ENCODE measurements at regions of chr4 and their contacts with region 1.

Region 1: GRCh38 chr4:157978680-157979361 is 194.0 kb downstream of the GASK1B start:
- DNase-seq: peak in 4 of 5 donors; percentile 27 to 38 (median 32)
- ATAC-seq: peak; percentile 67 to 88 (median 79)
- H3K4me3 ChIP-seq: peak overlapping the region in 5 of 12 donors; percentile 5 to 39 (median 27)
- H3K27ac ChIP-seq: no peak overlapping the region
- H3K4me1 ChIP-seq: peaks cover 0 to 8% (median 0%) of the 10 kb centered on the region in 12 donors
- H3K27me3 ChIP-seq: no peaks in the 10 kb centered on the region
- CTCF ChIP-seq: peak; percentile 72 to 91 (median 84)
- POLR2A ChIP-seq: no peak

Region 2: DNA sequence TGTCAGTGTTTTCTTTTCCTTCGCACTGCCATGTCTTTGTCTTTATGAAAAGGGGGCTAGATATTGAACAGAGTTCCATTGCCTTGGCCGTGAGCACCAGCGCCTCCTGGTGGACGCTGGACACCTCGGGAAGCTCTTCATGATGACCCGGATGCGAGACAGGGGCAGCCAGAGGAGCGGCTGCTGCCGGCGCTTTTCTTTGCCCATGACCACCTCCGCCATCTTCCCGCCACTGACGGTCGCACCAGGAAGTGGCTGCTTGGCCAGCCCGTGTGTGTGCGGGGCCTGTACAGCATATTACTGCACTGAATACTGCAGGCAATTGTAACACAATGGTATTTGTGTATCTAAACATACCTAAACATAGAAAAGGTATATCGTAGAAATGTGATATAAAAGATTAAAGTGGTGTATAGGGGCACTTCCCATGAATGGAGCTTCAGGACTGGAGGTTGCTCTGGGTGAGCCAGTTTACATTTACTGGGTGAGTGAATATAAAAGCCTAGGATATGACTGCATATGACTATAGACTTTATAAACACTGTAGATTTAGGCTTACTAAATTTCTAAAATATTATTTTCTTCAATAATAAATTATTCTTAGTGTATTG is 774.1 kb before region 1 on chr4:
- intact Hi-C with region 1: loop called in 1 of 10 experiments (anchors 5 kb)
- DNase-seq: no peak
- ATAC-seq: no peak
- H3K4me3 ChIP-seq: no peak overlapping the region
- H3K27ac ChIP-seq: no peak overlapping the region
- H3K4me1 ChIP-seq: no peaks in the 10 kb centered on the region
- H3K27me3 ChIP-seq: no peaks in the 10 kb centered on the region
- CTCF ChIP-seq: peak in 6 of 12 donors; percentile 9 to 39 (median 24)
- POLR2A ChIP-seq: no peak

Region 3: GRCh38 chr4:157217708-157218107 is 761.1 kb before region 1 on chr4:
- intact Hi-C with region 1: loop called in 6 of 10 experiments (anchors 5 to 10 kb)
- DNase-seq: no peak
- ATAC-seq: no peak
- H3K4me3 ChIP-seq: no peak overlapping the region
- H3K27ac ChIP-seq: no peak overlapping the region
- H3K4me1 ChIP-seq: peaks cover 0 to 15% (median 3%) of the 10 kb centered on the region in 12 donors
- H3K27me3 ChIP-seq: peaks cover 7 to 43% (median 35%) of the 10 kb centered on the region in 9 donors
- CTCF ChIP-seq: peak in 8 of 12 donors; percentile 15 to 55 (median 35)
- POLR2A ChIP-seq: no peak

Region 4: GRCh38 chr4:158229768-158230167 is 250.9 kb after region 1 on chr4:
- intact Hi-C with region 1: no loop called
- DNase-seq: no peak
- ATAC-seq: no peak
- H3K4me3 ChIP-seq: no peak overlapping the region
- H3K27ac ChIP-seq: no peak overlapping the region
- H3K4me1 ChIP-seq: peaks cover 0 to 6% (median 0%) of the 10 kb centered on the region in 12 donors
- H3K27me3 ChIP-seq: no peaks in the 10 kb centered on the region
- CTCF ChIP-seq: no peak
- POLR2A ChIP-seq: no peak